Naive thymus-derived CD4-positive, alpha-beta T cell (primary cell): ENCODE measurements at regions of chr3 and their contacts with region 1.

Region 1: GRCh38 chr3:179562591-179563270 is at the start of gene ACTL6A:
- DNase-seq: peak; percentile 86 to 98 (median 96)
- ATAC-seq: peak; percentile 96
- H3K4me3 ChIP-seq: peak within 1 kb of the TSS; percentile 73
- H3K4me3 Mint-ChIP-seq: peak within 1 kb of the TSS; percentile 91 to 100 (median 99)
- H3K27ac ChIP-seq: peak within 1 kb of the TSS; percentile 78
- H3K27ac Mint-ChIP-seq: peak within 1 kb of the TSS; percentile 86 to 98 (median 95)
- H3K4me1 ChIP-seq: peaks cover 10% of the 10 kb centered on the region in 2 donors
- H3K4me1 Mint-ChIP-seq: peaks cover 13 to 49% (median 33%) of the 10 kb centered on the region in 7 donors
- H3K27me3 ChIP-seq: no peaks in the 10 kb centered on the region
- H3K27me3 Mint-ChIP-seq: peaks cover 0 to 13% (median 0%) of the 10 kb centered on the region in 5 donors
- total RNA-seq, gene ACTL6A: 23.2 to 78.3 (median 49.0) TPM

Region 2: DNA sequence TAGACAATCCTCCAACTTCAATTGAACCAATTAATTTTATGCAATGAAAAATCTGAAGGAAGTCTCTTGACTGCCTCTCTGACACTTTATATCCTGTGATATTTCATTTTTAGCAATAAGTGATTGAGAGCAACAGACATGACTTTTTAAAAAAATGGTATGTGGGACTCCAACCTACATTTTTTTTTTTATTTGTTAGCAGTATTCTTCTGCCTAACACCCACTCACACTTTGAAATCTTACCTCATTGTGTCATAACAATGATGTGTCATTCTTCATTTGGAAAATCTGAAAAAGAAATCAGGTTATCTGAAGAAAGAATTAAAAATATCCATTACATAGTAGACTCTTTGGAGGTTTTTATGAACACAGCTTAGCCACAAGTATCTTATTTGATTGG is 1567.8 kb before region 1 on chr3:
- CTCF ChIA-PET with region 1: no interaction called
- POLR2A ChIA-PET with region 1: no interaction called
- intact Hi-C with region 1: loop called in 1 of 2 experiments (anchors 5 kb)
- DNase-seq: no peak
- ATAC-seq: no peak
- H3K4me3 ChIP-seq: no peak overlapping the region
- H3K4me3 Mint-ChIP-seq: no peak overlapping the region
- H3K27ac ChIP-seq: no peak overlapping the region
- H3K27ac Mint-ChIP-seq: peak overlapping the region in 3 of 9 donors; percentile 16 to 52 (median 40)
- H3K4me1 ChIP-seq: peaks cover 6 to 8% of the 10 kb centered on the region in 2 donors
- H3K4me1 Mint-ChIP-seq: peaks cover 5 to 28% (median 23%) of the 10 kb centered on the region in 7 donors
- H3K27me3 ChIP-seq: no peaks in the 10 kb centered on the region
- H3K27me3 Mint-ChIP-seq: no peaks in the 10 kb centered on the region

Region 3: DNA sequence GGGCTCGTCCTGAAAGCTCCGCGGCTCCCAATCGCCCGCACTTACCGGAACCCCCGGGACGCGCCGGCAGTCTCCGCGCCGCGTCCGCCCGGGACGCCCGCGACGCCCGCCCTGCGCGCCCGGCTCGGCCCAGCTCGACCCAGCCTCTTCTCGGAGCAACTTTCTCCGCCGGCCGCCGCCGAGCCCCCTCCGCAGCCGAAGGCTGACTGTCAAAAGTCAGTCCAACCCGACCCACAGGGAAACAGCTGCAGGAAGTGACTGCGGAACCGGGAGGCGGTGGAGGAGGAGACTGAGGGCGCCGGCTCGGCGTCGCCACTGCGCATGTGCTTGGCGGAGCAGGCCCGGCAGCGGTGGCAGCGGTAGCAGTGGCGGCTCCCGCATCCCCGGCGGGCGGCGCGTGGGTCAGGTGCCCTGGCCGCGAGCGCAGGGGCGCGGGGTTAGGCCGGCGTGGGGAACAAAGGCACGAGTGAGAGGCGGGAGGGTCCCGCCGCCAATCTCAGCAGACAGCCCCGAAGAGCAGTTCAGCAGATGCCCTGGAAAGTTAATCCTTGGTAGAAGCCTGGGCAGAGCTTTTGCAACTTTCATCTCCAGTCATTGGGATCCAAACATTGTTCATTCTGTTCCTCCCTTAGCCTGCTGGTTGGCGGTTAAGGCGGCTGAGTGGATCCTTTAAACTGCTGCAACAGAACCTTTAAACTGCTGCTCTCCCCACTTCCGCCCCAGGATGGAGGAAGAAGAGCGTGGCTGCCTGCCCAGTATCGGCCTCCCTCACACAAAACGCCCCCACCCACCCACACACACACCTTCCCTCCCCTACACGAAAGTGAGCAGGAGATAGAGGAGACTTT is 491.0 kb before region 1 on chr3 and contains the start of gene ZMAT3:
- CTCF ChIA-PET with region 1: interaction called, 3 read pairs
- POLR2A ChIA-PET with region 1: no interaction called
- intact Hi-C with region 1: loop called (anchors 1 kb)
- DNase-seq: peak; percentile 72 to 88 (median 83)
- ATAC-seq: peak; percentile 88
- H3K4me3 ChIP-seq: peak within 1 kb of the TSS; percentile 74
- H3K4me3 Mint-ChIP-seq: peak within 1 kb of the TSS; percentile 97 to 100 (median 98)
- H3K27ac ChIP-seq: peak within 1 kb of the TSS; percentile 87
- H3K27ac Mint-ChIP-seq: peak within 1 kb of the TSS; percentile 89 to 98 (median 95)
- H3K4me1 ChIP-seq: peaks cover 13 to 18% of the 10 kb centered on the region in 2 donors
- H3K4me1 Mint-ChIP-seq: peaks cover 24 to 81% (median 59%) of the 10 kb centered on the region in 7 donors
- H3K27me3 ChIP-seq: no peaks in the 10 kb centered on the region
- H3K27me3 Mint-ChIP-seq: no peaks in the 10 kb centered on the region
- total RNA-seq, gene ZMAT3: 20.6 to 23.7 (median 21.7) TPM

Region 4: GRCh38 chr3:179322286-179323196 is 240.2 kb before region 1 on chr3 and contains the start of gene ZNF639:
- CTCF ChIA-PET with region 1: no interaction called
- POLR2A ChIA-PET with region 1: no interaction called
- intact Hi-C with region 1: loop called (anchors 1 kb)
- DNase-seq: peak; percentile 80 to 89 (median 85)
- ATAC-seq: peak; percentile 94
- H3K4me3 ChIP-seq: peak within 1 kb of the TSS; percentile 93
- H3K4me3 Mint-ChIP-seq: peak within 1 kb of the TSS; percentile 88 to 96 (median 94)
- H3K27ac ChIP-seq: peak within 1 kb of the TSS; percentile 98
- H3K27ac Mint-ChIP-seq: peak within 1 kb of the TSS; percentile 81 to 98 (median 93)
- H3K4me1 ChIP-seq: peaks cover 9 to 22% of the 10 kb centered on the region in 2 donors
- H3K4me1 Mint-ChIP-seq: peaks cover 22 to 48% (median 37%) of the 10 kb centered on the region in 7 donors
- H3K27me3 ChIP-seq: no peaks in the 10 kb centered on the region
- H3K27me3 Mint-ChIP-seq: peaks cover 0 to 16% (median 0%) of the 10 kb centered on the region in 5 donors
- total RNA-seq, gene ZNF639: 33.1 to 74.9 (median 46.0) TPM

Region 5: GRCh38 chr3:179451265-179452175 is 111.2 kb before region 1 on chr3 and contains the start of gene GNB4:
- CTCF ChIA-PET with region 1: no interaction called
- POLR2A ChIA-PET with region 1: no interaction called
- intact Hi-C with region 1: loop called (anchors 1 to 5 kb)
- DNase-seq: peak in 8 of 9 donors; percentile 8 to 72 (median 32)
- ATAC-seq: peak; percentile 91
- H3K4me3 ChIP-seq: peak within 1 kb of the TSS; percentile 39
- H3K4me3 Mint-ChIP-seq: peak within 1 kb of the TSS; percentile 77 to 90 (median 86)
- H3K27ac ChIP-seq: no peak within 1 kb of the TSS
- H3K27ac Mint-ChIP-seq: peak within 1 kb of the TSS in 2 of 9 donors; percentile 62 to 84
- H3K4me1 ChIP-seq: peaks cover 0 to 10% of the 10 kb centered on the region in 2 donors
- H3K4me1 Mint-ChIP-seq: peaks cover 14 to 29% (median 23%) of the 10 kb centered on the region in 7 donors
- H3K27me3 ChIP-seq: peaks cover 4% of the 10 kb centered on the region in 2 donors
- H3K27me3 Mint-ChIP-seq: peaks cover 57 to 87% (median 75%) of the 10 kb centered on the region in 5 donors
- total RNA-seq, gene GNB4: 1.1 to 11.3 (median 2.1) TPM

Region 6: DNA sequence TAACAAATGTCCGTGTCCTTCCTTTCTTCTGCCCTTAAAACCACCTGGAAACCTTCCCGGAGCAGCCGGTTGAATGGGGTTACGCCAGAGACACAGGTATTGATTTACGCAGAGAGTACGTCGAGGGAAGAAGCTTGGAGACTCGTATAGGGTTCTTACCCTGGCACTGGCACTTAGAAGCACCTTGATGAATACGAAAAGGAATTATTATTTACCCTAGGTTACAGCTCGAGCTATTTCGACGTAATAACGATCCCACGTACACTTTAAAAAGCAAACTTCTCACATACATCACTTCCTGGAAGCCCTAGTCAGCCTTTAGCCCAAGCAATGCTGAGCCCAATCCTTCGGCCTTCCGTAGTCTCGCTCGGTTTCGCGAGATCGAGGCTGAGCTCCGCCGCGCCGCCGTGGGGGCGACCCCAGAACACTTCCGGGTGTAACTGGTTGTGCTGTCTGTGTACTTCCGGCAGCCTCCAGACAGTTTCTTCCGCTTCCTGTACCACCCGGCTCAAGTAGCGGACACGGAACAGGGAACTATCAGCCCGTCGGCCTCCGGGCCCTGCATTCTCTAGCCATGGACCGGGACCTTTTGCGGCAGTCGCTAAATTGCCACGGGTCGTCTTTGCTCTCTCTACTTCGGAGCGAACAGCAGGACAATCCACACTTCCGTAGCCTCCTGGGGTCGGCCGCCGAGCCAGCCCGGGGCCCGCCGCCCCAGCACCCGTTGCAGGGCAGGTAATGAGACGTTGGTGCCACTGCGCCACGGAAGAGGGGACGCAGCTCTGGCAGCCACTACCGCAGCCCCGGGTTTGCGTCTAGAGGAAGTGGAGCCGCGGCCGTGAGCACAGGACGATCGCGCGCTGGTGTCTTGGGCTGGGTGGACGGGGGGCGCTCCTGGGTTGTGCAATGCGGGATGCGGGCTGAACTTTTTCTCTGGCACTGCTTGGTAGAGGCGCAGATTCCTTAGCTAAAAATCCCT is 1039.2 kb after region 1 on chr3 and contains the start of gene TTC14:
- CTCF ChIA-PET with region 1: no interaction called
- POLR2A ChIA-PET with region 1: no interaction called
- intact Hi-C with region 1: loop called (anchors 1 kb)
- DNase-seq: peak; percentile 80 to 94 (median 92)
- ATAC-seq: peak; percentile 94
- H3K4me3 ChIP-seq: peak within 1 kb of the TSS; percentile 92
- H3K4me3 Mint-ChIP-seq: peak within 1 kb of the TSS; percentile 88 to 98 (median 96)
- H3K27ac ChIP-seq: peak within 1 kb of the TSS; percentile 88
- H3K27ac Mint-ChIP-seq: peak within 1 kb of the TSS; percentile 92 to 99 (median 97)
- H3K4me1 ChIP-seq: peaks cover 12% of the 10 kb centered on the region in 2 donors
- H3K4me1 Mint-ChIP-seq: peaks cover 14 to 47% (median 39%) of the 10 kb centered on the region in 7 donors
- H3K27me3 ChIP-seq: no peaks in the 10 kb centered on the region
- H3K27me3 Mint-ChIP-seq: peaks cover 4 to 23% (median 18%) of the 10 kb centered on the region in 5 donors
- total RNA-seq, gene TTC14: 76.5 to 201 (median 103) TPM